ENCODE measurements at regions of chr2 and their contacts with region 1.

Region 1: GRCh38 chr2:162123806-162124758 is 28.0 kb downstream of the GCG start:
- DNase-seq: peak in 2 of 4 donors; percentile 49 to 64
- ATAC-seq: peak; percentile 80
- H3K4me3 ChIP-seq: no peak overlapping the region
- H3K27ac ChIP-seq: no peak overlapping the region
- H3K4me1 ChIP-seq: peaks cover 0 to 6% of the 10 kb centered on the region in 2 donors
- H3K27me3 ChIP-seq: no peaks in the 10 kb centered on the region
- CTCF ChIP-seq: peak; percentile 78 to 88

Region 2: GRCh38 chr2:162007447-162008040 is 116.5 kb before region 1 on chr2:
- intact Hi-C with region 1: loop called (anchors 5 to 10 kb)
- DNase-seq: no peak
- ATAC-seq: peak; percentile 46
- H3K4me3 ChIP-seq: no peak overlapping the region
- H3K27ac ChIP-seq: no peak overlapping the region
- H3K4me1 ChIP-seq: no peaks in the 10 kb centered on the region
- H3K27me3 ChIP-seq: no peaks in the 10 kb centered on the region
- CTCF ChIP-seq: peak; percentile 44 to 68

Region 3: DNA sequence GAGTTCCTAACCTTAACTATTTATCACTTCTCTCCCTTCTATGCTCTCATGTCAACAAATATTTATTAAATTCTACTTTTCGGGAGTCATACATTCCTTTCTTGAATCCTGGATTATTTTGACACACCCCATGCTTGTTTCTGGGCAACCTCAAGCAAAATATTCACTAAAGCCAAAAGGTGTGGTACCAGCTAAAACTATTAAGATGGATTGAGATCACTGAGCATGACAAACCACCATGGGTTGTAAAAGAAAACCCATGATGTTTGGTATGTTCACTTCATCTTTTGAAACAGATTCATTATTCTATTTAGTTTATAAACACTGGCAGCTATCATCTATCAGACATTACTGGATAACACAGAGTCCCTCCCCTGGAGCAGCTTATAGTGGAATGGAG is 82.6 kb before region 1 on chr2:
- intact Hi-C with region 1: no loop called
- DNase-seq: no peak
- ATAC-seq: no peak
- H3K4me3 ChIP-seq: no peak overlapping the region
- H3K27ac ChIP-seq: no peak overlapping the region
- H3K4me1 ChIP-seq: no peaks in the 10 kb centered on the region
- H3K27me3 ChIP-seq: no peaks in the 10 kb centered on the region
- CTCF ChIP-seq: no peak

Region 4: DNA sequence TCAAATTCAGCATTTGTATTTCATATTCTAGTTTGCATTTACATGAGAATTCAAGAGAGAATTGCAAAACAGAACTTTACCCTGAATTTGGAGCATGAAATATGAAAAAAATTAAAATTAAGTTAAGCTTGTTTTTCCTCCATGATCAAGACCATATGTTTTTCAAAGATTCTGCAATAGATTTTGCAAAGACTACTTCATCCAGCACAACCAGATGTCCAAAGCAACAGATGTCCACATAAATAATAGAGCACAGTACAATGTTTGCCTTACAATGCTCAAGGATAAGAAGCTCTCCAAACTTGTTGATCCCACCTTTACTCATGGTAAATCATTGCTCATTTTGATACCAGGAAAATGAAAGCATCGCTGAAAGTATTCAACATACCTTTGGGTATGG is 93.5 kb after region 1 on chr2:
- intact Hi-C with region 1: no loop called
- DNase-seq: no peak
- ATAC-seq: no peak
- H3K4me3 ChIP-seq: no peak overlapping the region
- H3K27ac ChIP-seq: no peak overlapping the region
- H3K4me1 ChIP-seq: peaks cover 0 to 6% of the 10 kb centered on the region in 2 donors
- H3K27me3 ChIP-seq: no peaks in the 10 kb centered on the region
- CTCF ChIP-seq: no peak